ENCODE measurements at regions of chr7 and their contacts with region 1.

Region 1: GRCh38 chr7:142459551-142459963 is 201.7 kb upstream of the PRSS58 start:
- DNase-seq: peak; percentile 51
- ATAC-seq: peak; percentile 59
- H3K4me3 Mint-ChIP-seq: no peak overlapping the region
- H3K27ac Mint-ChIP-seq: no peak overlapping the region
- H3K4me1 Mint-ChIP-seq: peaks cover 46% of the 10 kb centered on the region
- H3K27me3 Mint-ChIP-seq: no peaks in the 10 kb centered on the region
- CTCF ChIP-seq: peak; percentile 74

Region 2: DNA sequence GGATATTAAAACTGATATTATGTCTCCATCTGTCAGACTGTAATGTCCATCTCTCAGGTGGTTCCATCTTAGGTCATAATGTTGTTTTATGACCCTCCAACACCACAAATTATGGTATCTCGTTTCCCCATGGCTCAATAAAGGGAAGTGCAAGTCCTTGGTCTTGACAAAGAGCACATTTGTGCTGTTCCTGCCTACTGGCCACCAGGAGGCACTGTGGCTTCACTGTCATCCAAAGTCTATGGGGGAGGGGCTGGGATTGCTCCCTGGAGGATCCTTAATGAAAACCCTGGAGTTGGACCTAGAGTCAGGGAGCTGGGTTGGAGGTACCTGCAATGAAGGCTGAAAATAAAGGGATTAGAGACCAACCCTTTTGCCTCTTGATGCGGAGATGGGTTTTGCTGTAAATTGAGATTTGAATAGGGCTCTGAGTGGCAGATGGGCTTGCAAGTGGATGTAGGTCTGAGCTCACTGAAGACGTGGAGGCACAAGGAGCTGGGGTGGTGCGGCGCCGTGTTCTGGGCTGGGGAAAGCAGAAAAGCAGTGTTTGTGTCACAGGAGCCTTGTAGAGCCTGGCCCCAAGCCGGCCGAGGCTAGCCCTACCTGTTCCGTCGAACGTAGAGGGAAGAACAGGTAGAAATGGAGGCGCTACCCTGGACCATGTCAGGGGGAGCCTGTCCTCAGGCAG is 21.2 kb before region 1 on chr7:
- CTCF ChIA-PET with region 1: interaction called, 21 read pairs
- POLR2A ChIA-PET with region 1: no interaction called
- intact Hi-C with region 1: no loop called
- DNase-seq: peak; percentile 39
- ATAC-seq: peak; percentile 60
- H3K4me3 Mint-ChIP-seq: no peak overlapping the region
- H3K27ac Mint-ChIP-seq: no peak overlapping the region
- H3K4me1 Mint-ChIP-seq: peaks cover 51% of the 10 kb centered on the region
- H3K27me3 Mint-ChIP-seq: no peaks in the 10 kb centered on the region
- CTCF ChIP-seq: peak; percentile 65

Region 3: GRCh38 chr7:142445019-142445686 is 14.4 kb before region 1 on chr7:
- CTCF ChIA-PET with region 1: interaction called, 21 read pairs
- POLR2A ChIA-PET with region 1: no interaction called
- intact Hi-C with region 1: no loop called
- DNase-seq: peak; percentile 59
- ATAC-seq: peak; percentile 75
- H3K4me3 Mint-ChIP-seq: no peak overlapping the region
- H3K27ac Mint-ChIP-seq: no peak overlapping the region
- H3K4me1 Mint-ChIP-seq: peaks cover 31% of the 10 kb centered on the region
- H3K27me3 Mint-ChIP-seq: no peaks in the 10 kb centered on the region
- CTCF ChIP-seq: peak; percentile 22

Region 4: GRCh38 chr7:142478479-142479072 is 19.0 kb after region 1 on chr7:
- CTCF ChIA-PET with region 1: interaction called, 513 read pairs
- POLR2A ChIA-PET with region 1: interaction called, 4 read pairs
- intact Hi-C with region 1: no loop called
- DNase-seq: peak; percentile 41
- ATAC-seq: peak; percentile 50
- H3K4me3 Mint-ChIP-seq: no peak overlapping the region
- H3K27ac Mint-ChIP-seq: peak overlapping the region; percentile 25
- H3K4me1 Mint-ChIP-seq: peaks cover 77% of the 10 kb centered on the region
- H3K27me3 Mint-ChIP-seq: no peaks in the 10 kb centered on the region
- CTCF ChIP-seq: peak; percentile 67

Region 5: DNA sequence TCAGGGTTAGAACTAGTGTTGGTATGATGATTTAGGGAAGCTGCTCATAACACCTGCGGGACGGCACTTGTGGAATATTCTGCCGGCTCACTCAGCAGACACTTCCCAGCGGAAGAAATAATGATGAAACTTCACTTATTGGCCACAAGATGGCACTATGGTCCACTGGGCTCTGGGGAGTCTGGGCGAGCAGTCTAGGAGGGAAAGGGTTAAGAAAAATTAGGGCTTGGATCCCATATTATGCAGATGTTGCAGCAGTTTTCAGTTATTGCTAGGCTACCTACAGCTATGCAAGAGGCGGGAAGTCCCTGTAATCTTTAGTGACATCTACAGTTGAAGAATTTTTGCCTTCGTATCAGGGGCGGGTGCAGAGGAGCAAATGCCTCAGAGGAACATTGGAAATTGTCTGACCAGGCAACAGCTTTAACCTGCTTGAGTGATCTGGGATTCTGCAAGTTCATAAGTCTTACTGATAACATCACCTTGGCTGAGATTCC is 37.0 kb after region 1 on chr7:
- CTCF ChIA-PET with region 1: interaction called, 513 read pairs
- POLR2A ChIA-PET with region 1: no interaction called
- intact Hi-C with region 1: no loop called
- DNase-seq: peak; percentile 37
- ATAC-seq: peak; percentile 50
- H3K4me3 Mint-ChIP-seq: peak overlapping the region; percentile 30
- H3K27ac Mint-ChIP-seq: peak overlapping the region; percentile 47
- H3K4me1 Mint-ChIP-seq: peaks cover 37% of the 10 kb centered on the region
- H3K27me3 Mint-ChIP-seq: no peaks in the 10 kb centered on the region
- CTCF ChIP-seq: peak; percentile 74

Region 6: GRCh38 chr7:142516038-142516501 is 56.5 kb after region 1 on chr7:
- CTCF ChIA-PET with region 1: interaction called, 13 read pairs
- POLR2A ChIA-PET with region 1: no interaction called
- intact Hi-C with region 1: loop called (anchors 5 kb)
- DNase-seq: peak; percentile 49
- ATAC-seq: peak; percentile 80
- H3K4me3 Mint-ChIP-seq: no peak overlapping the region
- H3K27ac Mint-ChIP-seq: peak overlapping the region; percentile 35
- H3K4me1 Mint-ChIP-seq: peaks cover 35% of the 10 kb centered on the region
- H3K27me3 Mint-ChIP-seq: no peaks in the 10 kb centered on the region
- CTCF ChIP-seq: peak; percentile 75

Region 7: GRCh38 chr7:142523821-142524460 is 64.4 kb after region 1 on chr7:
- CTCF ChIA-PET with region 1: interaction called, 11 read pairs
- POLR2A ChIA-PET with region 1: no interaction called
- intact Hi-C with region 1: loop called (anchors 5 kb)
- DNase-seq: no peak
- ATAC-seq: no peak
- H3K4me3 Mint-ChIP-seq: no peak overlapping the region
- H3K27ac Mint-ChIP-seq: no peak overlapping the region
- H3K4me1 Mint-ChIP-seq: peaks cover 13% of the 10 kb centered on the region
- H3K27me3 Mint-ChIP-seq: no peaks in the 10 kb centered on the region
- CTCF ChIP-seq: no peak